Panc1 (cell line): ENCODE measurements at regions of chr19 and their contacts with region 1.

Region 1: DNA sequence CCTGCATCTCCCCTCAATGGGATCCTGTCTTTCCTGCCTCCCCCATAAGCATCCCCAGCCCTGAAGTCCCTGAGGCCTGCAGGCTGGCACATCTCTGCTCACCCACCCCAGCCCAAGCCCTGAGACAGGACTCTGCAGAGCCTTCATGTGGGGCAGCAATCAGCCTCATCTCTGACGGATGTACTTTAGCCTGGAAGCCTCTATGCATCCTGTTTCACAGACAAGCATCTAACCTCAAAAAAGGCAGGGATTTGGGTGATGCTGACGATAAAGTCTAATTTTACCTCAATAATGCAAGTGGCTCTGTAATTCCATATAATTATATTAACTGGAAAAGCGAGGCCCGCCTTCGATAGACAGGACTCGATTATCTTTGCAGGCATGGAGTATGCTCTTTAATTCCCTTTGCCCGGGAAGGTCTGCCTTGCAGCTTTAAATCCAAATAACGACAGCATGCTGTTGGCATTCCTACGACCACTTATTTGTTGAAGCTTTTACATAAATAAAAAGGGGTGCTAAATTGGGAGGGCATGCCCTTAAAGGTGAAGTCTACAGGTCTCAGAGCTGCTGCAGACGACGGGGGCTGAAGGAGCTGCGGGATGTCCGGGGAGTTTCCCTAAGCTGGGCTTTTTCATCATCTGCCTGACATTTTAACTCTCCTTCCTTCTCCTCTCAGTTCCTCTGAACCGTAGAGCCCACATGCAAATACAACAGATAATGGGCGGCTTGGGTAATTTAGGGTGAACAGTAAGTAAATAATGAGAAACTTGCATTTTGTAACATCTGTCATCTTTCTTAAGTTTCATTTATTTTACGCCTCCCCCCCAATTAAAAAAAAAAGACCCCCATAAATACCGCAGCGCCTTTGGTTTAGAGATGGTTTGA is 211.5 kb downstream of the URI1 start:
- DNase-seq: no peak
- ATAC-seq: no peak
- H3K4me3 ChIP-seq: no peak overlapping the region
- H3K27ac ChIP-seq: no peak overlapping the region
- H3K4me1 ChIP-seq: no peaks in the 10 kb centered on the region
- H3K27me3 ChIP-seq: peaks cover 10% of the 10 kb centered on the region
- CTCF ChIP-seq: no peak

Region 2: DNA sequence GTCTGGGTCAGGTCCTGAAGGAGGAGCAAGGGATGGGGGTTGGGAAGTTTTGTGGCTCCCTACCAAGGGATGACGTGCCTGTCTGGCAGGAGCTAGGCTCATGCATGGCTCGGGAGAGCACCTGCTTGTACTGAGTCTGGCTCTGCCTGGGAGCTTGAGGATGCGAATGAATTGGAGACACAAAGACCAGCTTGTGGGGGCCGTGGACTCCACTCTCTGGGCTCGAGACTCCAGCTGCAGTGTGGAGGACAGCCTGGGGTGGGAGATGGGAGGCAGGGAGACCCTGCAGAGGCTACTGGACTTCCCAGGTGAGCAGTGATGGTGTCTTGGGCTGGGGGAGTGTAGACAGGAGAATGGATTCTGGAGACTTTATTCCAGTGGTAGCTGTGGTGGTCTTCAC is 226.8 kb before region 1 on chr19:
- CTCF ChIA-PET with region 1: no interaction called
- POLR2A ChIA-PET with region 1: interaction called, 11 read pairs
- in situ Hi-C with region 1: no loop called
- intact Hi-C with region 1: no loop called
- DNase-seq: no peak
- ATAC-seq: no peak
- H3K4me3 ChIP-seq: no peak overlapping the region
- H3K27ac ChIP-seq: no peak overlapping the region
- H3K4me1 ChIP-seq: no peaks in the 10 kb centered on the region
- H3K27me3 ChIP-seq: no peaks in the 10 kb centered on the region
- CTCF ChIP-seq: no peak

Region 3: DNA sequence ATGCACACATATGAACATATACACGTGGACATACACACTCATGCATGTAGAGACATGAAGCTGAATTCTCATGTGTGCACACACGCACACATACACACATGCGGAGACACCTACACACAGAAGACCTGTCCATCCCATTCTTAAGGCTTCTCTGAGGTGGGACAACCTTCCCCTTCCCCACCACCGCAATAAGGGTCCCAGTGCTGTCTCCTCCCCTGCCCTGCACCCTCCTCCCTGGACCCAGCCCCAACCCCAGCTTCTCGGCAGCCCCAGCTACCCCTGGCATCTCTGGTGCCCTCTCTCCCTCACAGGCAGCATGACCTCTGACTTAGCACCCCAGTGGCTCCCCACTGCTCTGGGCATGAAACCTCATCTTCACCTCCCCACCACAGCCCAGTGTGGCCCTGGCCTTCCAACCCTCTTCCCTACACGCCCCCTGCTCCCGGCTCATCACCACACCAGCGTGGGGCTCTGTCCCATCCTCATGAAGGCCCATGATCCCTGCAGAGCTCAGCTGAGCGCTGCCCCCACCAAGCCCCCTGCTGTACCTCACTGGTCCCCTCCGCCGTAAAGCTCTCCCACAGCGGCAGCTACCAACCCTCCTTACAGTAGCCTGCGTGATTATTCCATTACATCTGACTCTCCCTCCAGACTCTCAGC is 14.5 kb after region 1 on chr19:
- CTCF ChIA-PET with region 1: no interaction called
- POLR2A ChIA-PET with region 1: no interaction called
- in situ Hi-C with region 1: no loop called
- intact Hi-C with region 1: no loop called
- DNase-seq: no peak
- ATAC-seq: no peak
- H3K4me3 ChIP-seq: no peak overlapping the region
- H3K27ac ChIP-seq: no peak overlapping the region
- H3K4me1 ChIP-seq: no peaks in the 10 kb centered on the region
- H3K27me3 ChIP-seq: no peaks in the 10 kb centered on the region; the same call in 1 of the 2 replicates
- CTCF ChIP-seq: no peak